Panc1 (cell line): ENCODE measurements at regions of chr2 and their contacts with region 1.

Region 1: GRCh38 chr2:100630473-100630977 is 67.7 kb downstream of the PDCL3 start:
- DNase-seq: no peak
- ATAC-seq: peak; percentile 56; the same call in 1 of the 2 replicates
- H3K4me3 ChIP-seq: no peak overlapping the region
- H3K27ac ChIP-seq: no peak overlapping the region
- H3K4me1 ChIP-seq: no peaks in the 10 kb centered on the region
- H3K27me3 ChIP-seq: no peaks in the 10 kb centered on the region
- CTCF ChIP-seq: no peak

Region 2: GRCh38 chr2:100643906-100644501 is 13.5 kb after region 1 on chr2:
- CTCF ChIA-PET with region 1: no interaction called
- POLR2A ChIA-PET with region 1: interaction called, 13 read pairs
- in situ Hi-C with region 1: no loop called
- intact Hi-C with region 1: no loop called
- DNase-seq: no peak
- ATAC-seq: no peak
- H3K4me3 ChIP-seq: no peak overlapping the region
- H3K27ac ChIP-seq: no peak overlapping the region
- H3K4me1 ChIP-seq: no peaks in the 10 kb centered on the region
- H3K27me3 ChIP-seq: no peaks in the 10 kb centered on the region
- CTCF ChIP-seq: no peak